ENCODE measurements at regions of chr1 and their contacts with region 1.

Region 1: DNA sequence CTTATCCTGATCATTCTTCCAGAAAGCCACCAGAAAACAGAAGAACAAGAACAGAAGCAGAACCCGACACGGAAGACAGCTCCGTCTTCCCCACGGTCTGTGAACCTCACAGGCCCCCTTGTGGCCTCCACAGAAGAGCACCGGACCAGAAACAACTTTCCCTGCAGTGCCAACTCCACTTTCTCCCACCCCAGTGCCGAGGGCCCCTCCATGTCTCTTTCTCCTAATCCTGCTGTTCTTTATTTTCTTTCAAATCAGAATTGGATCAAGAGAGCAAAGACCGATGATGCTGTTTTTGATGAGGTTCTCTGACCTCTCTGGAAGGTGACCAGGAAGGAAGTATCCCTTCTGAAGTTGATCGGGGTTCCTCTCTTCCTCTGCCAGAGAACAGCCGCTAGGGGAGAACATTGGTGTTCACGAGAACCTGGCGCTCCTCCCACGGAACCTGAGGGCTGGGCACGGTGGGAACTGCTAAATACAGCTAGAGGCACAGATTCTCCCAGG is 58.9 kb upstream of the CTTNBP2NL start:
- DNase-seq: peak; percentile 53
- H3K4me3 ChIP-seq: no peak overlapping the region
- H3K27ac ChIP-seq: no peak overlapping the region
- H3K4me1 ChIP-seq: peaks cover 44% of the 10 kb centered on the region
- H3K27me3 ChIP-seq: no peaks in the 10 kb centered on the region
- CTCF ChIP-seq: peak; percentile 51 to 86

Region 2: DNA sequence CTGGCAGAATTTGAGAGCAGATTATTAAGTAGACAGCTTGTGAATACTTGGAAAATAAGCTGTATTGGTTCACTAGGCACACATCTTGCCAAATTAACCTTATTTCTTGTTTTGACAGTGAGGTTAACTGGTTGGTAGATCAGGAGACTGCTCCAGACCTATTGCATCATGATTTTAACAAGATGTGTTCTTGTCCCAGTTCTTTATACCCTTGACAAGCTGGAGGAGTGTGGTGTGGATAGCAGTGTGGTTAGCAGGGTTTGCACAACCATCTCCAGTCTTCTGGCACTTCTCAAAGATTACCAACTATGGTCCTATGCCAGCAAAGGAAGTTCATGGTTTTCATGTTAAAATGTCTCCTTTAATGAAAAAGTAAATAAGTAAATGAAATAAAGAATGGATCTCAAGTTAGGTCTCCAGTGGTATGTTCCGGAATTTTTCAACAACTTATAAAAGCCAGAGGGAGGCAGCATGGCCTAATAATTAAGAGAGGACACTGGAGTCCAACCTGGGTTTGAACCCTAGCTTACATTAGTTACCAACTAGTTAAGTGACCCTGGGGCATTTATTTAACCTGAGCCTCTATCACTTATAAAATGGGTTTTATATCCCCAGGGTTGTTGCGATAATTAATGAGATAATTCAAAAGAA is 547.3 kb before region 1 on chr1:
- CTCF ChIA-PET with region 1: no interaction called
- dilution Hi-C with region 1: no loop called
- in situ Hi-C with region 1: loop called in 1 of 2 experiments (anchors 25 kb)
- intact Hi-C with region 1: loop called (anchors 1 kb)
- DNase-seq: no peak
- H3K4me3 ChIP-seq: no peak overlapping the region
- H3K27ac ChIP-seq: no peak overlapping the region
- H3K4me1 ChIP-seq: no peaks in the 10 kb centered on the region
- H3K27me3 ChIP-seq: no peaks in the 10 kb centered on the region
- CTCF ChIP-seq: peak in 1 of 2 donors; percentile 29

Region 3: DNA sequence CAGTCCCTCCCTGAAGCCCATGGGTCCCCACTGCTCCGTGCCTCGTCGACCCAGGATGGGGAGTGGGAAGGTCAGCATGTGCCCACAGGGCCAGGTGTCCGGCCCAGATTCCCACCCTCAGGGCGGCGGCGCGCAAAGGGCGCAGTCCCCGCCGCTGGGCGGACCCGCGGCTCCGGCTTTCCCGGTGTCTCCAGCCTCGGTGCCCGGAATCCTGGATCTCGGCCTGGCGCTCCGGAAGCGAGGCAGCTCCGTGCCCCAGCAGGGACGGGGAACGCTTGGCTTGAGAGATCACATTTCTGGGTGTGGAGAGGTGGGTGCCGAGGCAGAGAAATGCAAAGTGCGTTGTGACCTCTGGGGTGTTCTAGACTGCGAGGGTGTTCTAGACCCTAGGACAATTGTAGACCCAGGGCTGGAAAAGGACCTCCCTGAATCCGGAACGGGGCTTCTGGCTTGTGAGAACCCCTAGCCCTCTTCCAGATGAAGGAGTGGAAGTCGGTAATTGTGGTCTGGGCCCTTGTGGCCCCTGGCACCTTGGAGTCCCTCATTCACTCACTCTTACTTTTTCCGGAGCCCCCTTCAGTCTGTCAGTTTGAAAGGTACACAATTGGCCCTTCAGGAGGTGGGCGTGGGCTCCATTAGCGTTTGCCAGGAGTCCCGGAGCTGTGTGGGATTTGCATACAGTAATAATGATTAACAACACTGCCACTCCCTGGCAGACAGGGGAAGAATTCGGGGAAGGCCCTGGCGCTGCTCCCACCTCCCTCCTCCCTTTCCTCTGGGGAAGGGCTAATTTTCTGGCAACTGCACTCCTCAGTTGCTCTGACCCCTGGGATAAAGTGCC is 346.0 kb before region 1 on chr1:
- CTCF ChIA-PET with region 1: interaction called, 3 read pairs
- dilution Hi-C with region 1: no loop called
- in situ Hi-C with region 1: no loop called
- intact Hi-C with region 1: loop called (anchors 2 kb)
- DNase-seq: peak; percentile 57
- H3K4me3 ChIP-seq: peak overlapping the region; percentile 32 to 52 (median 48)
- H3K27ac ChIP-seq: no peak overlapping the region
- H3K4me1 ChIP-seq: peaks cover 18% of the 10 kb centered on the region
- H3K27me3 ChIP-seq: peaks cover 5% of the 10 kb centered on the region
- CTCF ChIP-seq: peak; percentile 43 to 60

Region 4: GRCh38 chr1:112063781-112064728 is 273.0 kb before region 1 on chr1:
- CTCF ChIA-PET with region 1: interaction called, 3 read pairs
- dilution Hi-C with region 1: no loop called
- in situ Hi-C with region 1: no loop called
- intact Hi-C with region 1: loop called (anchors 10 kb)
- DNase-seq: no peak
- H3K4me3 ChIP-seq: no peak overlapping the region
- H3K27ac ChIP-seq: no peak overlapping the region
- H3K4me1 ChIP-seq: peaks cover 35% of the 10 kb centered on the region
- H3K27me3 ChIP-seq: no peaks in the 10 kb centered on the region
- CTCF ChIP-seq: no peak

Region 5: GRCh38 chr1:112219267-112219666 is 117.8 kb before region 1 on chr1:
- CTCF ChIA-PET with region 1: no interaction called
- dilution Hi-C with region 1: no loop called
- in situ Hi-C with region 1: no loop called
- intact Hi-C with region 1: no loop called
- DNase-seq: no peak
- H3K4me3 ChIP-seq: no peak overlapping the region
- H3K27ac ChIP-seq: no peak overlapping the region
- H3K4me1 ChIP-seq: no peaks in the 10 kb centered on the region
- H3K27me3 ChIP-seq: no peaks in the 10 kb centered on the region
- CTCF ChIP-seq: no peak

Region 6: GRCh38 chr1:112298558-112298957 is 38.5 kb before region 1 on chr1:
- CTCF ChIA-PET with region 1: interaction called, 59 read pairs
- dilution Hi-C with region 1: no loop called
- in situ Hi-C with region 1: no loop called
- intact Hi-C with region 1: loop called (anchors 1 kb)
- DNase-seq: peak; percentile 58
- H3K4me3 ChIP-seq: no peak overlapping the region
- H3K27ac ChIP-seq: no peak overlapping the region
- H3K4me1 ChIP-seq: peaks cover 10% of the 10 kb centered on the region
- H3K27me3 ChIP-seq: no peaks in the 10 kb centered on the region
- CTCF ChIP-seq: peak; percentile 86 to 89

Region 7: GRCh38 chr1:112319371-112320040 is 17.6 kb before region 1 on chr1:
- CTCF ChIA-PET with region 1: interaction called, 15 read pairs
- dilution Hi-C with region 1: no loop called
- in situ Hi-C with region 1: no loop called
- intact Hi-C with region 1: loop called (anchors 1 kb)
- DNase-seq: peak; percentile 78
- H3K4me3 ChIP-seq: peak overlapping the region; percentile 20 to 51 (median 49)
- H3K27ac ChIP-seq: peak overlapping the region; percentile 61
- H3K4me1 ChIP-seq: peaks cover 21% of the 10 kb centered on the region
- H3K27me3 ChIP-seq: no peaks in the 10 kb centered on the region
- CTCF ChIP-seq: no peak

Measured in mammary epithelial cell (primary cell).